A549 (cell line): ENCODE measurements at regions of chr2 and their contacts with region 1.

Region 1: GRCh38 chr2:28751252-28751955 is at the start of gene PPP1CB:
- DNase-seq: peak; percentile 88 to 98
- ATAC-seq: peak; percentile 89 to 91
- H3K4me3 ChIP-seq: peak within 1 kb of the TSS; percentile 91
- H3K27ac ChIP-seq: peak within 1 kb of the TSS; percentile 98 to 99
- H3K4me1 ChIP-seq: peaks cover 35% of the 10 kb centered on the region
- CTCF ChIP-seq: peak; percentile 29; the same call in 2 of the 3 replicates
- EP300 ChIP-seq: no peak
- POLR2A ChIP-seq: peak; percentile 95
- RAD21 ChIP-seq: peak in 1 of 2 experiments; percentile 19; a peak in 2 of 5 replicates
- polyA plus RNA-seq, gene PPP1CB: 119 and 188 TPM in 2 replicates

Region 2: GRCh38 chr2:28583899-28584553 is 167.4 kb before region 1 on chr2:
- CTCF ChIA-PET with region 1: interaction called, 7 read pairs
- POLR2A ChIA-PET with region 1: interaction called, 31 read pairs
- DNase-seq: peak; percentile 94 to 99
- ATAC-seq: peak; percentile 94
- H3K4me3 ChIP-seq: peak overlapping the region; percentile 7; the same call in 1 of the 3 replicates
- H3K27ac ChIP-seq: peak overlapping the region; percentile 94 to 97
- H3K4me1 ChIP-seq: peaks cover 41% of the 10 kb centered on the region
- CTCF ChIP-seq: no peak
- EP300 ChIP-seq: peak; percentile 85 to 87; a peak in 3 of 5 replicates
- POLR2A ChIP-seq: no peak
- RAD21 ChIP-seq: peak in 1 of 2 experiments; percentile 41; a peak in 3 of 5 replicates

Region 3: GRCh38 chr2:28621172-28622100 is 130.0 kb before region 1 on chr2:
- CTCF ChIA-PET with region 1: interaction called, 11 read pairs
- POLR2A ChIA-PET with region 1: interaction called, 8 read pairs
- DNase-seq: peak; percentile 43 to 68
- ATAC-seq: peak; percentile 90 to 96
- H3K4me3 ChIP-seq: no peak overlapping the region
- H3K27ac ChIP-seq: peak overlapping the region; percentile 42 to 61; a peak in 4 of 6 replicates
- H3K4me1 ChIP-seq: peaks cover 9% of the 10 kb centered on the region
- CTCF ChIP-seq: peak; percentile 54
- EP300 ChIP-seq: no peak
- POLR2A ChIP-seq: no peak
- RAD21 ChIP-seq: peak; percentile 69 to 77

Region 4: DNA sequence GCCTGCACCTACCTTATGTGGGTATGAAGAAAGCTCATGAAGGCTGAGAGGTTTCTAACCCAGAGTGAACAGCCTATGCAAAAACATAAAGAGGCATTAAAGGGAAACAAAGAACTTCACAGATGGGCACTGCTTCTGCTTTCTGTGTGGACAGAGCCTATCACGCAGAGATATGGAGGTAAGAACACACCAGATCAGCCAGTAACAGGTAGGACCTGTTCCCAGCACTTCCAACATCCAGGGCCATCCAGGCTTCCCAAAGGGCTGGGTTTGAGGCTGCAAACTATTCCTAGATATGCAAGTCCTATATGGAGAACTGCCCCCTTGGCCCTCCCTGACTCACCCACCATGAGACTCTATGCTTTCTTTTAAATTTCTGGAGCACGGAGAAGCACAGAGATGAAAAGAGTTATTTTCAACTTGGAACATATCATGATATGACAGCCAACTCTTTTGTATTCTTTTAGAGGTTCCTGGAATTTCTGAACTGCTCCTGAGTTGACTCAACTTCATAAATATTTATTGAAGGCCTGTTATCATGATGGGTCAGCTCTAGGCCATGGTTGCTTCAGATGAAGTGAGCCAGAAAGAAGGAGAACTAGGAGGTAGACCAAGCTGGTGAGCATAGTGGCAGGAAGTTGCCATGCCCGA is 77.2 kb before region 1 on chr2:
- CTCF ChIA-PET with region 1: no interaction called
- POLR2A ChIA-PET with region 1: no interaction called
- DNase-seq: no peak
- ATAC-seq: no peak
- H3K4me3 ChIP-seq: no peak overlapping the region
- H3K27ac ChIP-seq: no peak overlapping the region
- H3K4me1 ChIP-seq: no peaks in the 10 kb centered on the region
- CTCF ChIP-seq: no peak
- EP300 ChIP-seq: no peak
- POLR2A ChIP-seq: no peak
- RAD21 ChIP-seq: no peak

Region 5: DNA sequence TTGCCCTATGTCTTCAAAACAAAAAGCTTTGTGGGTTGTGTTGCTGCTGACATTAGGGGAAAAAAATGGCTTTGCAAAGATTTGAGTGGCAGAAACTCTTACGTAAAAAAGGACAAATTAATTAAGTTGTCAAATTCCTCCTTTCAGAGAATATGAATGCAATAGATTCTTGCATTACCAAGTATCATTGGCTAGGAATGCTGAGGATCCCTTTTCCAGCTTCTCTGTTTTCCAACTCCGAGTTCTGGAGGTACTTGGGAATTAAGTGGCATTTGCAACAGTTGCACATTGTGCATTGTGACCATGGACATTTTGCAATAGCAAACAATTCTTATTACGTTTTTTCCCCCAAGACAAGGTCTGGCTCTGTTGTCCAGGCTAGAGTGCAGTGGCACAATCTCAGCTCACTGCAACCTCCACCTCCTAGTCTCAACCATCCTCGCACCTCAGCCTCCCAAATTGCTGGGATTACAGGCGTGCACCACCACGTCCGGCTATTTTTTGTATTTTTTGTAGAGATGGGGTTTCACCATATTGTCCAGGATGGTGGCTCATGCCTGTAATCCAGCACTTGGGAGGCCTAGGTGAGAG is 29.7 kb before region 1 on chr2:
- CTCF ChIA-PET with region 1: no interaction called
- POLR2A ChIA-PET with region 1: interaction called, 10 read pairs
- DNase-seq: no peak
- ATAC-seq: no peak
- H3K4me3 ChIP-seq: no peak overlapping the region
- H3K27ac ChIP-seq: no peak overlapping the region
- H3K4me1 ChIP-seq: peaks cover 11% of the 10 kb centered on the region
- CTCF ChIP-seq: no peak
- EP300 ChIP-seq: no peak
- POLR2A ChIP-seq: no peak
- RAD21 ChIP-seq: no peak

Region 6: GRCh38 chr2:28736034-28736433 is 15.4 kb before region 1 on chr2:
- CTCF ChIA-PET with region 1: interaction called, 7 read pairs
- POLR2A ChIA-PET with region 1: interaction called, 12 read pairs
- DNase-seq: no peak
- ATAC-seq: peak; percentile 66 to 68; a peak in 5 of 6 replicates
- H3K4me3 ChIP-seq: no peak overlapping the region
- H3K27ac ChIP-seq: no peak overlapping the region
- H3K4me1 ChIP-seq: no peaks in the 10 kb centered on the region
- CTCF ChIP-seq: no peak
- EP300 ChIP-seq: no peak
- POLR2A ChIP-seq: no peak
- RAD21 ChIP-seq: no peak

Region 7: DNA sequence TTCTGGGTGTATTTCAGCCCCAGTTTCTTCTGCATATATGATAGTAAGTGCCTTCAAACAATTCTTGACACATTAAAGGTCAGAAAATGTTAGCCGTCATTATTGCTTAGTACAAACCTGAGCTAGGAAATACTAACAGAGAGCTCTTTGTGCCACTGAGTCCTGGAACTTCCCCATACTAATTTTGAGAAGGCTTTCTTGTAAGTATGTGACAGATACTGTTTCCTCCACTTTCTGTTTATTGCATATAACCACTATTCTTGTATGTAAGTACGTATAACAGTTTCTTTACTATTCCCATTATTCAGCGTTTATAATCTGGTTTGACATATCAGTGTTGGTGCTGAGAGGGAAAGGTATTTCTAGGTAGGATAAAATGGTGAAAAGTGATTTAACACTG is 10.0 kb after region 1 on chr2:
- CTCF ChIA-PET with region 1: interaction called, 13 read pairs
- POLR2A ChIA-PET with region 1: interaction called, 3 read pairs
- DNase-seq: no peak
- ATAC-seq: no peak
- H3K4me3 ChIP-seq: no peak overlapping the region
- H3K27ac ChIP-seq: no peak overlapping the region
- H3K4me1 ChIP-seq: peaks cover 32% of the 10 kb centered on the region
- CTCF ChIP-seq: no peak
- EP300 ChIP-seq: no peak
- POLR2A ChIP-seq: no peak
- RAD21 ChIP-seq: no peak